ENCODE measurements at regions of chr17 and their contacts with region 1.

Region 1: GRCh38 chr17:82098072-82098821 is at the start of gene FASN:
- DNase-seq: peak; percentile 95
- H3K4me3 Mint-ChIP-seq: peak within 1 kb of the TSS; percentile 71
- H3K27ac Mint-ChIP-seq: peak within 1 kb of the TSS; percentile 69
- H3K4me1 Mint-ChIP-seq: peaks cover 12% of the 10 kb centered on the region
- H3K27me3 Mint-ChIP-seq: no peaks in the 10 kb centered on the region
- total RNA-seq, gene FASN: 209 to 212 TPM

Region 2: DNA sequence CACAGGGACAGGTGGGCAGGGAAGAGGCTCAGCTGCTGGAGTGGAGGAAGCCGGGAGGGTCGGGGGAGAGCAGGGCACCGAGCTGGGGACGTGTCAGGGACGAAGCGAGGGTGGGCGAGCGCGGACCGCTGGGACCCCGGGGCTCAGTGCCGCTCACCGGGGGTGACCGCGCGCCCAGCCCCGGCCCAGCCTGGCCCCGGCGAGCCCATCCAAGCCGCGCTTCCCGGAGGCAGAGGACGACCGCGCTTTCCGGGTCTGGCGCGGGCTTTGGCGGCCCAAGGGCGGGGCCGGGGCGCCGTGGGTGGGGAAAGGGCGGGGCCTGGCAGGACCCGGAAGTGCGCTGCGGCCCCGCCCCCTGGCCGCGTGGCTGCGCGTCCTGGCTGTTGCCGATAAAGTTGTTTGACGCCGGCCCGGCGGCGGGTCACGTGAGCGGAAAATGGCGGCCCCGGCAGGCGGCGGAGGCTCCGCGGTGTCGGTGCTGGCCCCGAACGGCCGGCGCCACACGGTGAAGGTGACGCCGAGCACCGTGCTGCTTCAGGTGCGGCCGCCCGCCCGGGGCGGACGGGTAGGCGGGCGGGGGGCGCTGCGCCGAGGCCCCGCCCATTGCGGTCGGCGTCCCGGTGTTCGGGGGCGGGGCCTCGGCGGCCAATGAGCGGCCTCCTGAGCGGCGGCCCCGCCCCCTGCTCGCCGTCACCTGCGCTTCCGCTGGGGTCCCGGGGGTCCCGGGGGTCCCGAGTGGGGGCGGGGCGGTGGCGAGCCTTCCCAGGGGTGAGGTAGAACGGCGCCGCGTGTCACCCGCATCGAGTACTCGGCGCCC is 120.8 kb before region 1 on chr17 and contains the start of gene ASPSCR1:
- CTCF ChIA-PET with region 1: no interaction called
- POLR2A ChIA-PET with region 1: interaction called, 4 read pairs
- intact Hi-C with region 1: loop called (anchors 5 kb)
- DNase-seq: peak; percentile 91
- H3K4me3 Mint-ChIP-seq: peak within 1 kb of the TSS; percentile 92
- H3K27ac Mint-ChIP-seq: peak within 1 kb of the TSS; percentile 92
- H3K4me1 Mint-ChIP-seq: peaks cover 33% of the 10 kb centered on the region
- H3K27me3 Mint-ChIP-seq: no peaks in the 10 kb centered on the region
- total RNA-seq, gene ASPSCR1: 25.4 to 27.1 TPM

Region 3: GRCh38 chr17:82030470-82031302 is 67.6 kb before region 1 on chr17:
- CTCF ChIA-PET with region 1: interaction called, 5 read pairs
- POLR2A ChIA-PET with region 1: interaction called, 6 read pairs
- intact Hi-C with region 1: loop called (anchors 2 kb)
- DNase-seq: peak; percentile 89
- H3K4me3 Mint-ChIP-seq: peak overlapping the region; percentile 76
- H3K27ac Mint-ChIP-seq: no peak overlapping the region
- H3K4me1 Mint-ChIP-seq: peaks cover 13% of the 10 kb centered on the region
- H3K27me3 Mint-ChIP-seq: no peaks in the 10 kb centered on the region

Region 4: GRCh38 chr17:82153745-82154375 is 55.6 kb after region 1 on chr17:
- CTCF ChIA-PET with region 1: no interaction called
- POLR2A ChIA-PET with region 1: no interaction called
- intact Hi-C with region 1: loop called (anchors 1 kb)
- DNase-seq: peak; percentile 87
- H3K4me3 Mint-ChIP-seq: no peak overlapping the region
- H3K27ac Mint-ChIP-seq: no peak overlapping the region
- H3K4me1 Mint-ChIP-seq: peaks cover 4% of the 10 kb centered on the region
- H3K27me3 Mint-ChIP-seq: no peaks in the 10 kb centered on the region

Region 5: DNA sequence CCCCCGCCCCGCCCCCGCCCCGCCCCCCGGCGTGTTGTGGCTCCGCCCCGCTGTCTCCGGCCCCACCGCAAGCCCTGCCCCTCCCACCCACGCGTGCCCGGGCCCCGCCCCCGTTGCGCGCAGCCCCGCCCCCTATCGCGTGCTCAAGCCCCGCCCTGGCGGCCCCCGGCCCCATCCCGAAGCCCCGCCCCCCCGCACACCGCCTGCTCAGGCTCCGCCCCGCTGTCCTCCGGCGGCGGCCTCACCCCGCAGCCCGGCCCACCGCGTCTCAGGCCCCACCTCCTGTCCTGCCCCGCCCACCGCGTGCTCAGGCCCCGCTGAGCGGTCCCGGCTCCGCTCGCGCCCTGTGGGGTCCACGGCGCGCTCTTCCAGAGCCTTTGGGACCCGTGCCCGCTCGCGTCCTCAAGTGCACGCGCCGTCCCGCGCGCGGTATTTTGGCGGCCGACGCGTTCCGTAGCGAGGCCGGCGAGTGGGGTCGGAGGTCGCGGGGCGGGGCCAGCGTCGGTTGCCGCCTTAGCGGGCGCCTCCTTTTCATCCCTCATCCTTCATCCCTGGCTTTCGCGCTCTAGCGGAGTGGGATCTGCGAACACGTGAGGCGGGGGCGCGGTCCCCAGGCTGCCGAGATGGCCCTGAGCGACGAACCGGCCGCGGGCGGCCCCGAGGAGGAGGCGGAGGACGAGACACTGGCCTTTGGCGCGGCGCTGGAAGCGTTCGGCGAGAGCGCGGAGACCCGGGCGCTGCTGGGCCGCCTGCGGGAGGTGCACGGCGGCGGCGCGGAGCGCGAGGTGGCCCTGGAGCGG is 653.5 kb after region 1 on chr17 and contains the start of gene TBCD:
- CTCF ChIA-PET with region 1: no interaction called
- POLR2A ChIA-PET with region 1: no interaction called
- intact Hi-C with region 1: loop called (anchors 10 kb)
- DNase-seq: peak; percentile 94
- H3K4me3 Mint-ChIP-seq: peak within 1 kb of the TSS; percentile 78
- H3K27ac Mint-ChIP-seq: peak within 1 kb of the TSS; percentile 18
- H3K4me1 Mint-ChIP-seq: peaks cover 24% of the 10 kb centered on the region
- H3K27me3 Mint-ChIP-seq: no peaks in the 10 kb centered on the region
- total RNA-seq, gene TBCD: 97.0 to 98.2 TPM